ENCODE measurements at regions of chr14 and their contacts with region 1.

Region 1: DNA sequence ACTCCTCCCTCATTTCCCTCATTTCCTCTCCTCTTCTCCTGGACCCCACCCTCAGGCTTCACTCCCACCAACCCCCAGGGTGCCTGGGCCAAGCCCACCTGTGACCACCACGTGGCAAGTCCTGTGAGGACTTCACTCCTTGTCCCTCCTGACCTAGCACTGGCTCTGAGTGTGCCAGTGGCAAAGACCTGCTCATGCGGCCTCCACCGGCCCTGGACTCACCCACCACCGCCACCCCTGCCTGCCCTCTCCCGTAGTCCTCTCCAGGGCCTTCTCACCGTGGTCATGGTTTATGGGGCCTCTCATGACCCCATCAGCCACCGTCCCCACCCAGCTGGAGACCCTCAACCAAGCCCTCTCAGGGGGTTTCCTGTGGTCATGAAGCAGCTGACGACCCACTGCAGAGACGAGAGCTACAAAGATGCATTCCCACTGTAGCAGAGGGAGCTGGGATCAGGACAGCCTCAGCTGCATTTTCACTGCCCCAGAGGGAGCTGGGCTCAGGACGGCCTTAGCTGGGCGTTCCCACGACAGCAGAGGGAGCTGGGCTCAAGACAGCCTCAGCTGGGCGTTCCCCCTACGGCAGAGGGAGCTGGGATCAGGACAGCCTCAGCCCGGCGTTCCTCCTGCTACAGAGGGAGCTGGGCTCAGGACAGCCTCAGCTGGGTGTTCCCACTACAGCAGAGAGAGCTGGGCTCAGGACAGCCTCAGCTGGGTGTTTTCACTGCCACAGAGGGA is 3.2 kb upstream of the C14orf180 start:
- DNase-seq: peak; percentile 22
- ATAC-seq: peak; percentile 79
- H3K4me3 ChIP-seq: no peak overlapping the region
- H3K27ac ChIP-seq: no peak overlapping the region
- H3K4me1 ChIP-seq: no peaks in the 10 kb centered on the region
- H3K27me3 ChIP-seq: peaks cover 43% of the 10 kb centered on the region
- CTCF ChIP-seq: 0 out of 2 replicates have a peak, but pooled peaks have one; percentile 14

Region 2: DNA sequence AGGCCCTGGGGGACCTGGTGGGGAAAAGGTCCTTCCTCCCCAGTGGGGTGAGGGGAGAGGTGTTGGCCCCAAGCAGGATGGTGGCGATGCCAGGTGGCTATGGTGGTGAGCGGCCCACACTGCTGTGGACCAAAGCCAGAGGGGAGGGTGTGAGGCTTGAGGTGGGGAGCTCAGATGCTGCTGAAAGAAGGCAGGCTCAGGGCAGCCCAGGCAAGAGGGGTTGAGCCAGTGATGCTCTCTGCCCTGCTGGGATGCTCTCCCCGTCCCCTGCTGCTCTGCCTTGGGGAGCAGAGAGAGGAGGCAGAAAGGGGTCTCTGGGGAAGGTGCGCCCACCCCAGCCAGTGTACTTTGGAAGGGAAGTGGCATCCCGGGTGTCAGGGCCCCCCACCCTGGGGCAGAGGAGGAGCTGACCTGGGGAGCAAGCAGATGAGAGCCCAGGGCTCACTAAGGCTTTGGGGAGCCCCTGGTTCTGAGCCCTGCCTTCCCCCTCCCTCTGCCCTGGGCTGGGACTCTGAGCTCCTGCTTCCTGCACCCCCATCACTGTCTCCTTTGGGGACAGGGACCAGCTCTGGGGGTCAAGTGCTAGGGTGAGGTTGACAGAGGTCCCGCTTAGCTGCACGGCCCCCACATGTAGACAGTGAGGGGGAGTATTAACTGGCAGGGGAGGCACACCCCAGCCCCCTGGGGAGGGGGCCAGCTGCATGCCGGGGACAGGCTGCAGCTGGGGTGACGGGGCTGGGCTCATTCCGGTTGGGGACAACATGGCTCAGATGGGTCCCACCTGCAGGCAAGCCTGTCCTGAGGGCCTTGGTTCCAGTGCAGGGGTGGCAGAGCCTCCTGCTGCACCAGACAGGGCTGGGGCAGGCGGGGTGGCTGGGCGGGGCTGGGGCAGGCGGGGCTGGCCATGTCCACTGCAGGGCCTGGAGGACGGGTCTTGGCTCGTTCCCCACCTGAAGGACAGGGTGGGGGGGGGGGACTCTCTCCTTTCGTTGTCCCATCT is 313.6 kb before region 1 on chr14:
- CTCF ChIA-PET with region 1: no interaction called
- POLR2A ChIA-PET with region 1: no interaction called
- intact Hi-C with region 1: no loop called
- DNase-seq: no peak
- ATAC-seq: no peak
- H3K4me3 ChIP-seq: no peak overlapping the region
- H3K27ac ChIP-seq: no peak overlapping the region
- H3K4me1 ChIP-seq: no peaks in the 10 kb centered on the region
- H3K27me3 ChIP-seq: peaks cover 18% of the 10 kb centered on the region; the same call in 1 of the 2 replicates
- CTCF ChIP-seq: no peak

Region 3: GRCh38 chr14:104639889-104640548 is 63.6 kb after region 1 on chr14:
- CTCF ChIA-PET with region 1: interaction called, 3 read pairs
- POLR2A ChIA-PET with region 1: no interaction called
- intact Hi-C with region 1: loop called (anchors 10 kb)
- DNase-seq: peak; percentile 73
- ATAC-seq: peak; percentile 96
- H3K4me3 ChIP-seq: no peak overlapping the region
- H3K27ac ChIP-seq: no peak overlapping the region
- H3K4me1 ChIP-seq: 0 out of 2 replicates have a peak, but pooled peaks cover 10% of the 10 kb centered on the region
- H3K27me3 ChIP-seq: peaks cover 40% of the 10 kb centered on the region
- CTCF ChIP-seq: peak; percentile 95

Region 4: GRCh38 chr14:104708606-104709268 is 132.3 kb after region 1 on chr14:
- CTCF ChIA-PET with region 1: no interaction called
- POLR2A ChIA-PET with region 1: no interaction called
- intact Hi-C with region 1: no loop called
- DNase-seq: peak; percentile 80
- ATAC-seq: peak; percentile 71
- H3K4me3 ChIP-seq: no peak overlapping the region
- H3K27ac ChIP-seq: no peak overlapping the region
- H3K4me1 ChIP-seq: no peaks in the 10 kb centered on the region
- H3K27me3 ChIP-seq: no peaks in the 10 kb centered on the region
- CTCF ChIP-seq: peak; percentile 93